ENCODE measurements at regions of chr1 and their contacts with region 1.

Region 1: DNA sequence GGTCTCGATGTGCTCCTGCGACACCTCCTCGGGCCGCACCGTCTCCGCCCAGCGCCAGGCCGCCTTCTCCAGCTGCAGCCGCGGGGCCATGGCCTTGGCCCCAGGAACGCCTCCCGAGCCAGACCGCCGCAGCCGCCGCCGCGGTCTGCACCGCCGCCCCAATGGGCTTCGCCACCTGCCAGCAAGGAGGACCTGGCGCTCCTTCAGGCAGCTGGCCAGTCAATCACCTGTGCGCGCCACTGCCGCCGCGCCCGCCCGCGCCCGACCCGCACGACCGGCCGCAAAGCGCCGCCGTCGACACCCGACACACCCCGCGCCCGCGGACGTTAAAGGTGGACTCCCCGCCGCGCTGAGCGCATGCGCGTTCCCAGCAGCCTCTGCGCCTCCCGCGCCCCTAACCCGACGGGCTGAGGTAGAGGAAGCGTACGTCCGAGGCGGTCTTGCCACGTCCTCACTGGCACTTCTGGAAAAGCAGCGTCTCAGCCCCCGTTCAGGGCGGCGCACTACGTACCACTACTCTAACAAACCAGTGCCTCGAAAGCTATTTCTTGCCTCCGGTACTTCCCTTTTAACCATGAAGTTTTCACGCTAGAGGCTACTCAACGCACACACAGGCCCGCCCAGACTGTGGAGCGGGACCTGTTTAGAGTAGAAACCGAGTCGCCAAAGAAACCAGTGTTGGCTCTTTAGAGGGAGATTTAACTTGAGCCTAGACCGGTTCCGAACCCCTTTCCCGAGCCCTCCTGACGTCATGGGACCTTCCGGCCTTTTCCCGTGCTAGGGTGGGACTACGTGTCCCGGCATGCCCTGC is at the start of gene USP48:
- DNase-seq: peak; percentile 98
- ATAC-seq: peak; percentile 88
- H3K4me3 Mint-ChIP-seq: peak within 1 kb of the TSS; percentile 98
- H3K27ac Mint-ChIP-seq: peak within 1 kb of the TSS; percentile 100
- H3K4me1 Mint-ChIP-seq: peaks cover 27% of the 10 kb centered on the region
- H3K27me3 Mint-ChIP-seq: peaks cover 4% of the 10 kb centered on the region
- total RNA-seq, gene USP48: 83.9 to 96.8 TPM

Region 2: GRCh38 chr1:21673277-21673780 is 109.7 kb before region 1 on chr1:
- CTCF ChIA-PET with region 1: no interaction called
- DNase-seq: no peak
- ATAC-seq: no peak
- H3K4me3 Mint-ChIP-seq: no peak overlapping the region
- H3K27ac Mint-ChIP-seq: no peak overlapping the region
- H3K4me1 Mint-ChIP-seq: peaks cover 3% of the 10 kb centered on the region
- H3K27me3 Mint-ChIP-seq: peaks cover 16% of the 10 kb centered on the region

Region 3: DNA sequence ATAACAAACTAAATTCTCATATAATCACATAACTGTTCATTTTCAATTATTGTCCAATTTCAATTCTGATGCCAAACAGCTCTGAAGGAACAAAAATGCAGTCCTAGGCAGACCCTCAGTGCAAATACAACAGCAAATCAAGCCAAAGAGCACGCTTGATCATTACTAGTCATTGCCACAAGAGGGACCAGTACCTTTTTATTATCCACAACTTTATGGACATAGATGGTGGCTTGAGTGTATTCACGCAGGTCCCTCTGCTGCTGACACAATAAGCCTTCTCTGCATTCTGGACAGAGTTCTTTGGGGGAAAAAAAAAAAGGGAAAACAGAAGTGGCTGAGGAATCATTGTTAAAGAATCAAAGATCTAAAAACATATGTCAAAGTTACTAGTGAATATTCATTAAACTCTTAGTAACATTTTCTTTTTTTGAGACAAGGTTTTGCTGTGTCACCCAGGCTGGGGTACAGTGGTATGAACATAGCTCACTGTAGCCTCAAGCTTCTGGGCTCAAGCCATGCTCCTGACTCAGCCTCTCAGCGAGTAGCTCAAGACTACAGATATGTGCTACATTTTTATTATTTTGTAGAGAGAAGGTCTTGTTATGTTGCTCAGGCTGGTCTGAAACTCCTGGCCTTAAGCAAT is 79.6 kb before region 1 on chr1:
- CTCF ChIA-PET with region 1: interaction called, 11 read pairs
- DNase-seq: no peak
- ATAC-seq: no peak
- H3K4me3 Mint-ChIP-seq: no peak overlapping the region
- H3K27ac Mint-ChIP-seq: no peak overlapping the region
- H3K4me1 Mint-ChIP-seq: peaks cover 24% of the 10 kb centered on the region
- H3K27me3 Mint-ChIP-seq: no peaks in the 10 kb centered on the region

Region 4: GRCh38 chr1:21811875-21812305 is 28.8 kb after region 1 on chr1 and contains the start of gene LDLRAD2:
- CTCF ChIA-PET with region 1: no interaction called
- DNase-seq: no peak
- ATAC-seq: no peak
- H3K4me3 Mint-ChIP-seq: no peak within 1 kb of the TSS
- H3K27ac Mint-ChIP-seq: no peak within 1 kb of the TSS
- H3K4me1 Mint-ChIP-seq: peaks cover 3% of the 10 kb centered on the region
- H3K27me3 Mint-ChIP-seq: peaks cover 26% of the 10 kb centered on the region
- total RNA-seq, gene LDLRAD2: not detected

Measured in activated CD8-positive, alpha-beta memory T cell treated with anti-CD3 and anti-CD28 coated beads, Interleukin-2, amount 10 ng/mL, durations not matched to agents 7 days and 5 days (primary cell).